WTC11 (cell line): ENCODE measurements at regions of chr18 and their contacts with region 1.

Region 1: GRCh38 chr18:12391618-12392165 is 14.7 kb upstream of the AFG3L2 start:
- DNase-seq: peak; percentile 50
- ATAC-seq: peak; percentile 78
- H3K4me3 Mint-ChIP-seq: no peak overlapping the region
- H3K27ac Mint-ChIP-seq: no peak overlapping the region; the same call in 1 of the 2 replicates
- H3K4me1 Mint-ChIP-seq: peaks cover 9% of the 10 kb centered on the region
- H3K27me3 Mint-ChIP-seq: no peaks in the 10 kb centered on the region
- CTCF ChIP-seq: peak; percentile 73

Region 2: DNA sequence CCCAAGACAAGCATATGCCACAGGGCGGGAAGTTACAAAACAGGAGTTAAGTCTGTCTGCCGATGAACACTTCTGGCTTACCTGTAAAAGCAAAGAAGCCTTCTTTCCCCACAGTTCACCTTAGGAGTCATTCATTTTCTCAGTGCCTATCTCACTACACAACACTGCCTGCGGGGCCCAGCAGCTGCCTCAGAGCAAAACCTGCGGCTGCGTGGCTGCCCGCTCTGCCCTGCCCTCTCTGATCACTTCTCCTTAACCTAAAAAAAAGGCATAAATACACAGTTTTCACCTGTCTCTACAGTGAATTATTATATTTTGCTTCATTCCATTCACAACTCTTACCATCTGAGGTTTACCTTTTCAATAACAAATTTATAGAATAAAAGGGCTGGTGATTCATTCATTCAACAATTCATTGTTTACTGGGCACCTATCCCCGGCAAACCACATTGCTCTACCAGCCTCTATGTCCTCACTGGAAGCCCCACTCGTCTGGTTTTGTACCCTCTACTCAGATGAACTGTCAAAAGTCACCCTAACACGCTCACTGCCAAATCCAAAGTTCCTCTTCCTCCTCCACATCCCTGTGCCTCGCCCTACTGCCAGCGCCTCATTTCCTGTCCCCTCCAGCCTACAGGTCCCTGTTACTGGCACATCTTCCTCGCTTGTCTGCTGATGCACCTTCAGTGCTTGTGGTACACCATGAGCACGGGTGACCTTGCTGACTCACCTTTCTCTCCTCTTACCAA is 46.0 kb before region 1 on chr18:
- CTCF ChIA-PET with region 1: no interaction called
- POLR2A ChIA-PET with region 1: no interaction called
- DNase-seq: no peak
- ATAC-seq: no peak
- H3K4me3 Mint-ChIP-seq: no peak overlapping the region
- H3K27ac Mint-ChIP-seq: peak overlapping the region; percentile 80
- H3K4me1 Mint-ChIP-seq: no peaks in the 10 kb centered on the region
- H3K27me3 Mint-ChIP-seq: no peaks in the 10 kb centered on the region
- CTCF ChIP-seq: no peak

Region 3: GRCh38 chr18:12408247-12408869 is 16.7 kb after region 1 on chr18:
- CTCF ChIA-PET with region 1: interaction called, 14 read pairs
- POLR2A ChIA-PET with region 1: interaction called, 4 read pairs
- DNase-seq: no peak
- ATAC-seq: no peak
- H3K4me3 Mint-ChIP-seq: peak overlapping the region; percentile 70
- H3K27ac Mint-ChIP-seq: no peak overlapping the region
- H3K4me1 Mint-ChIP-seq: peaks cover 20% of the 10 kb centered on the region
- H3K27me3 Mint-ChIP-seq: peaks cover 39% of the 10 kb centered on the region
- CTCF ChIP-seq: no peak

Region 4: DNA sequence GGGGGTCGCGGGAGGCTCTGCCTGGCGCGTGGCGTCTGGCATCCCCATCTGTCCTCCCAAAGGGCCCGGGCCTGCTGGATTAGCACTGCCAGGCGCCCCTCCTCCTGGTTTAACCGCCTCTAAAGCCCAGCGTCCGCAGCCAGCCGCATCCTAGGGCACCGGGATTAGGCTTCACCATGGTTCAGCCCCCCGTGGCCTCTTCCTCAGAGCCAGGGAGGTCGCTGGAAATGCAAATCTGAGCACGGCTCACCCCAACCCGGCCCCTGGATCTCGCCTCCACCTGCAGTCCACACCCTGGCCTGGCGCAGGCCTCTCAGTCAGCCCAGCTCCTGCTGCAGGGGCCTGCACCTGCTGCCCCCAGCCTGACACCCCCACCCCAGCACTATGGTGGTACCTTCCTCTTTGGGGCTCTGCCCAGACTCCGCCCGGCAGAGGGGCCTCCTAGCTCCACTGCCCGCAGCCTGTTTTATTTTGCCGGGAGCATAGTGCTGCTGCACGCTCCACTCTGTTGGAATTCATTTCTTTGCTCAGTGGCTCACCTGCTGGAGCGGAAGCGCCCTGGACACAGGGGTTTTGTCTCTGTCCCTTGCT is 29.2 kb after region 1 on chr18:
- CTCF ChIA-PET with region 1: interaction called, 18 read pairs
- POLR2A ChIA-PET with region 1: no interaction called
- DNase-seq: peak; percentile 76
- ATAC-seq: peak; percentile 74
- H3K4me3 Mint-ChIP-seq: peak overlapping the region; percentile 71
- H3K27ac Mint-ChIP-seq: peak overlapping the region; percentile 74
- H3K4me1 Mint-ChIP-seq: peaks cover 13% of the 10 kb centered on the region
- H3K27me3 Mint-ChIP-seq: no peaks in the 10 kb centered on the region
- CTCF ChIP-seq: no peak